BJ (cell line): ENCODE measurements at regions of chr7 and their contacts with region 1.

Region 1: DNA sequence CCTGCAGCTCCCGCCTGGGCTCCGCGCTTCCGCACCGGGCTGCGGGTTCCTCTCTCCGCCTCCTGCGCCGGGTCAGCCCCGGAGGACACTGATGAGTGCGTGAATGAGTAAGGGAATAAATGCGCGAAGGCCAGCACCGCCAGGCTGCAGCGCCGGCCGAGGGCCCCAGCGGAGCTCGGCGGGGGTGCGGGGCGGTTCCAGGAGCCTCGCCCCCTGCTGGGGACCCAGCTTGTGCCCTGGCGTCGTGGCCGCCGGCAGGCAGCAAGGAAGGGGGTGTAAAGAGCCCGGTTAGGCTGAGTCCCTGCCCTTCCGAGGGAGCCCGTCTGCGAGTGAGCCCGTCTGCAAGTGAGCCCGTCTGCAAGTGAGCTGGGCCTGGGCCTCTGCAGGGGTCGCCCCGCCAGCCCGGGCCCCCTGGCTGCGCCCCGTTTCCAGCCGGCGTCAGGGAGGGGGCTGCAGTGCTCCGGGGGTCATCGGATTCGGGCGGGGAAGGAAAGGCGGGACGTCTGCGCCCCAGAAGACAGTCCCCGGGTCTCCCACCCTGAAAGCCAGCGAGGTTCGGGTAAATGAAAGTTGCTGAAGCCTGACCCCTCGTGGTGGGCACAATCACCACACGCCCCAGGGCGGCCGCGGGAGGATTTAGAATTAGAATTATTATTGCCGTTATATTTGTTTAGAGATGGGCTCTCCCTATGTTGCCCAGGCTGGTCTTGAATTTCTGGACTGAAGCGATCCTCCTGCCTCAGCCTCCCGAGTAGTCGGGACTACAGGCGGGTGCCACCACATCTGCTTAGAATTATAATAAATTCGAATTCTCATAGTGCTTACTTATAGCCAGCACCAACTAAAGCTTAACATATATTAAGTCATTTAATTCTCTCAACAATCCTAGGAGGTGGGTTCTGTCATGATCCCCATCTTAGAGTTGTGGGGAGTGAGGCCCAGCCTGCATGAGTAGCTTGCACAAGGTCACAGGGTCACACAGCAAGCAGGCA is 8.6 kb upstream of the CRYGN start:
- DNase-seq: no peak
- H3K4me3 ChIP-seq: peak overlapping the region; percentile 44
- H3K27me3 ChIP-seq: peaks cover 2% of the 10 kb centered on the region; the same call in 1 of the 2 replicates
- CTCF ChIP-seq: peak; percentile 82

Region 2: GRCh38 chr7:151320263-151320845 is 128.2 kb before region 1 on chr7:
- CTCF ChIA-PET with region 1: interaction called, 46 read pairs
- POLR2A ChIA-PET with region 1: no interaction called
- DNase-seq: no peak
- H3K4me3 ChIP-seq: no peak overlapping the region
- H3K27me3 ChIP-seq: peaks cover 6% of the 10 kb centered on the region; the same call in 1 of the 2 replicates
- CTCF ChIP-seq: no peak

Region 3: DNA sequence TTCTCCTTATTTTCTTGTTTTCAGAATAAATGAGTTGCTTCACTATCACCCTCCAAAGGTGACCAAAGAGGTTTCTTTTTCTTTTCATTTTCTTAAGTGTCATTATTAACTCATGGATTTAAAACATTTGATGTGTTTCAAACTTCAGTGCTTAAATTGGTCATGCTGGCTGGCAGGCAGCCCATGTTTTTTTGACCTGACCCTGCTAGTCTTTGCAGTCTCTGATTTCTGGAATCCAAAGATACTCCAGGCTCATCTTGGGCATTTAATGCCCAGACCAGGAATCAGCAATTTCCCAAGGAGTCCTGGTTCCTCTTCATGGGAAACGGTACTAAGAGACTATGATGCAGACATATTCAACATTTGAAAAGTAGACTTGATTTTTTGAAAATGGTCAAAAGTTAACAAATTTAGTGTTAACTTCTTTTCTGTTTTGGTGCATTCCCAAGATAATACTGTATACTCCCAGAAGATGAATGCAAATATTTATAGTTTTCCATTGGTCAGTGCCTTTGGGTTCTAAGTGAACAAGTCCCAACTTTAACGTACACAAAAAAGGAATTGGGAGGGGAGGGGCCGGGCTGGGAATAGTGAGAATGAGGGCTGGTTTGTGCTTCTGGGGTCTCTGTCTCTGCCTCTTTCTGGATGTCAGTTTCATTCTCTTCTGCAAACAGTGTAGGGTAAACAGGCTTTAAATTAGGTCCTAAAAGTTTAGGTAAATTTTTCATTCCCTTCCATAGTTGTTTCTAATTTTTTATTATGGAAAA is 87.2 kb before region 1 on chr7:
- CTCF ChIA-PET with region 1: interaction called, 148 read pairs
- POLR2A ChIA-PET with region 1: no interaction called
- DNase-seq: no peak
- H3K4me3 ChIP-seq: no peak overlapping the region
- H3K27me3 ChIP-seq: no peaks in the 10 kb centered on the region
- CTCF ChIP-seq: no peak

Region 4: DNA sequence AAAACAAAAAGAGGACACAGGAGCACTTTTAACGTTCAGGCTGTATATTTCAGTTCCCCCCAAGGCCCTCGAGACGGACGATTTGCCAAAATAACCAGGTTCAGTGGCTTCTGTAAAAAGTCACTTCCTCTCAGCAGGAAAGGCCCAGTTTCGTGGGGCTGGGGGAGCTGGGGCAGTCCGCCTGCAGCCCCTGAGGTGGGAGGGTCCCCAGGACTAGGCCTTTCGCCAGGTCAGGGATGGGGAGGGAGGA is 67.5 kb before region 1 on chr7:
- CTCF ChIA-PET with region 1: interaction called, 22 read pairs
- POLR2A ChIA-PET with region 1: no interaction called
- DNase-seq: no peak
- H3K4me3 ChIP-seq: no peak overlapping the region
- H3K27me3 ChIP-seq: peaks cover 15% of the 10 kb centered on the region
- CTCF ChIP-seq: no peak

Region 5: DNA sequence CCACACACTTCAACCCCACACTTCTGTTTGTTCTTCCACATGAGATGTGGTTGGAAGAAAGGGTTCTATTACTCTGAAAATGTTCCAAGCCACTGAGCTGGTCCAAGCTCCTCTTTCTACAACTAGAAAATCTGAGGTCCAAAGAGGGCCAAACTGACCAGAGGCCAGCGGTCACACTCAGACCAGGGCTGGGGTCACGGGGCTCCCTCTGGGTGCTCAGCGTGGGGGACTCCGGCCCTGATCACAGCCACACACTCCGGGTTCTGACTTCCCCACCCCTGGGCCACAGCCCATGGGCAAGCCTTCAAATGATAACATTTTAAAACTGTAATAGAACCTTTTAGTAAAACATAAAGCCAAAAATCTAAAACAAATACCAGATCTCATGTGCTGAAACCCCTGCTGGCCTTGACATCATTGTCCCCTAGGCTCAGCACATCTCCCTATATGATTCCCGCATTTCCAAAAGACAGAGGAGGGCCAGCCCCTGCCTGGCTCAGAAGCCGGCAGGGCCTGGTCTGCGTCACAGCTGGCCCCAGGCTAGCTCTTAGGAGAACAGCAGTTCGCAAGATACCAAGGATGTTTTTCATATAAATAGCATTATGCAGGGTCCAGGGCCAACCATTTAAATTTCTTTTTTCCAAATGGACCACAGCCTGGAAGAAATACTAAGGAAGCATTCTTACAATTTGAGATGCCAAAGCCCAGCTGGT is 12.0 kb before region 1 on chr7:
- CTCF ChIA-PET with region 1: interaction called, 37 read pairs
- POLR2A ChIA-PET with region 1: no interaction called
- DNase-seq: peak; percentile 33
- H3K4me3 ChIP-seq: no peak overlapping the region
- H3K27me3 ChIP-seq: peaks cover 13% of the 10 kb centered on the region
- CTCF ChIP-seq: no peak

Region 6: GRCh38 chr7:151759591-151760042 is 311.1 kb after region 1 on chr7:
- CTCF ChIA-PET with region 1: interaction called, 34 read pairs
- POLR2A ChIA-PET with region 1: no interaction called
- DNase-seq: no peak
- H3K4me3 ChIP-seq: no peak overlapping the region
- H3K27me3 ChIP-seq: peaks cover 16% of the 10 kb centered on the region
- CTCF ChIP-seq: peak; percentile 93